ENCODE measurements at regions of chr4 and their contacts with region 1.

Region 1: GRCh38 chr4:163473576-163473975 is at the start of gene TKTL2:
- DNase-seq: no peak
- ATAC-seq: no peak
- H3K4me3 ChIP-seq: no peak within 1 kb of the TSS
- H3K4me3 Mint-ChIP-seq: no peak within 1 kb of the TSS
- H3K27ac ChIP-seq: no peak within 1 kb of the TSS
- H3K27ac Mint-ChIP-seq: no peak within 1 kb of the TSS
- H3K4me1 ChIP-seq: no peaks in the 10 kb centered on the region
- H3K4me1 Mint-ChIP-seq: no peaks in the 10 kb centered on the region
- H3K27me3 ChIP-seq: no peaks in the 10 kb centered on the region
- H3K27me3 Mint-ChIP-seq: peaks cover 14% of the 10 kb centered on the region
- CTCF ChIP-seq: no peak
- total RNA-seq, gene TKTL2: not detected

Region 2: DNA sequence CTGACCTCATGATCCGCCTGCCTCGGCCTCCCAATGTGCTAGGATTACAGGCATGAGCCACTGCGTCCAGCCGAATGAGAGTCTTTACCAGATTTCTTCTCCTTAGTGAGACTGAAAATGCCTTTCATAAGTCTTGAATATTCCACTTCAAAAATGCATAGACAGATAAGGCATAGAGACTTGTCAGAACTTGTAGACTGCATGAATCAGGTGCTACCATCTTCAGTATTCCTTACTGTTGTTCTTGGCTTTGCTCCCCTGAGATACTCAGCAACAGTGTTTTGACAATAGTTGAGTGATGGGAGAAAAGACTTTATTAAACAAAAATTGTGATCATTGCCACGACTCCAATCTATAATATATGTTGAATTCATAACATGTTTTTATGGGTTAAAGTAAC is 11.0 kb before region 1 on chr4:
- CTCF ChIA-PET with region 1: no interaction called
- POLR2A ChIA-PET with region 1: no interaction called
- intact Hi-C with region 1: no loop called
- DNase-seq: no peak
- ATAC-seq: no peak
- H3K4me3 ChIP-seq: no peak overlapping the region
- H3K4me3 Mint-ChIP-seq: no peak overlapping the region
- H3K27ac ChIP-seq: no peak overlapping the region
- H3K27ac Mint-ChIP-seq: no peak overlapping the region
- H3K4me1 ChIP-seq: no peaks in the 10 kb centered on the region
- H3K4me1 Mint-ChIP-seq: no peaks in the 10 kb centered on the region
- H3K27me3 ChIP-seq: peaks cover 0 to 3% of the 10 kb centered on the region in 2 experiments
- H3K27me3 Mint-ChIP-seq: peaks cover 36% of the 10 kb centered on the region
- CTCF ChIP-seq: no peak

Region 3: DNA sequence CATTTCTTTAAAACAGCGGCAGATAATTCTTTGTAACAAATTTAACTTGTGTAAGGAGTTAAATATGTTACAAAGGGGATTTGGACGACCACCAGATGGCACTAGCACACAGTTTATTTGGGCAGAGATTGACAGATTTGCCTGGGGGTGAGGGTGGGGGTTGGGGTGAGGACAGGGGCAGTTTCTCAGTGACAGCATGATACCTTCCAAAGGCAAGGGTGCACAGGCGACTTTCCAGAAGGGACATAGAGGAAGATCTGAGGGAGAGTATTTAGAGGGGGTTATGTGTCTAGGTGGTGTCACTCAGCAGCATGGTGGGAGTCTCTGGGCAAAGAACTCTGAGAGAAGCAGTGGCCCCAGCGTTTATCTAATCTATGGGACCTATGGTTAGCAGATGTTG is 11.3 kb after region 1 on chr4:
- CTCF ChIA-PET with region 1: no interaction called
- POLR2A ChIA-PET with region 1: no interaction called
- intact Hi-C with region 1: no loop called
- DNase-seq: peak; percentile 14 to 77 (median 39)
- ATAC-seq: peak; percentile 60
- H3K4me3 ChIP-seq: no peak overlapping the region
- H3K4me3 Mint-ChIP-seq: no peak overlapping the region
- H3K27ac ChIP-seq: no peak overlapping the region
- H3K27ac Mint-ChIP-seq: no peak overlapping the region
- H3K4me1 ChIP-seq: no peaks in the 10 kb centered on the region
- H3K4me1 Mint-ChIP-seq: no peaks in the 10 kb centered on the region
- H3K27me3 ChIP-seq: no peaks in the 10 kb centered on the region
- H3K27me3 Mint-ChIP-seq: peaks cover 11% of the 10 kb centered on the region
- CTCF ChIP-seq: peak; percentile 71

Region 4: DNA sequence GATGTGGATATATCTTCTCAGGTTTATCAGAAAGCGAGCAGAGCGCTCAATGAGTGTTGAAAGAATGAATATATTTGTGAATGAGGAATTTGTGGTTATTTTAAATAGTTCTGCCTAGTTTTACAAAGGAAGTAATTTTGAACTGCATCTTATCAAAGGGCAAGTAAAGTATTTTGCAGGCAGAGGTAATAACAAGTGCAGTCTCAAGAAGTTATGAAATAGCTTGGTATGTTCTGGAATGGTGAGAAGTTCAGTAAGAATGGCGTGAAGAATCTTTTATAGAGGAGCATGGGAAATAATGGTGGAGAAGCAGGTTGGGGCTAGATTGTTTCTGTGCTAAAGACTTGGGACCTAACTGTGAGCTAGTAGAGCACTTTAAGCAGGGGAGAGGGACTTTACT is 31.8 kb after region 1 on chr4:
- CTCF ChIA-PET with region 1: no interaction called
- POLR2A ChIA-PET with region 1: interaction called, 3 read pairs
- intact Hi-C with region 1: loop called in 1 of 2 experiments (anchors 1 kb)
- DNase-seq: no peak
- ATAC-seq: no peak
- H3K4me3 ChIP-seq: no peak overlapping the region
- H3K4me3 Mint-ChIP-seq: no peak overlapping the region
- H3K27ac ChIP-seq: no peak overlapping the region
- H3K27ac Mint-ChIP-seq: no peak overlapping the region
- H3K4me1 ChIP-seq: peaks cover 3% of the 10 kb centered on the region
- H3K4me1 Mint-ChIP-seq: peaks cover 48% of the 10 kb centered on the region
- H3K27me3 ChIP-seq: no peaks in the 10 kb centered on the region
- H3K27me3 Mint-ChIP-seq: no peaks in the 10 kb centered on the region
- CTCF ChIP-seq: no peak

Region 5: DNA sequence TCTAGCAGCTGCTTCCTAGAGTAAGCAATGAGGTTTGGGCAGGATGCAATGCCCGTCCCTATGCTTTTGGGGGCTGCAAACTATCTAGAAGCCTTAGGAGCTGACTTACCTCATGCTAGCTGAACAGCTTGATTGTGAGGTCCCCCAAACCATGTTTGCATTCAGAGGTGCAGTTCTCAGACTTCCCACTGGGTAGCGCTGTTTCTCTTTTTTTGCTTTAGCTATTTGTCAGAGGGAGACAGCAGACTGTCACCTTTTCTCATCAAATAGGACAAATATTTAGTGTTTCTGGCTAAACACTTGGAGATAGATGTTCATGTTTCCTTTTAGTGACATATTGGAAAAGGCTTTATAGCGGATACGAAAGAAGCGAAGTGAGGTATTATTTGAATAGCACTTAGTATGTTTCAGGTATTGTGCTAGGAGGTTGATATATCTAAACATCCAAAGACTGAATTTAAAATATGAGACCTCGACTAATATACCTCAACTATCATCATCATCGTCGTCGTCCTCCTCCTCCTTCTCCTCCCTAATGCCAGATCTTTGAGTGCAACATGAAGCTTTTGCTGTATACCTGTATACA is 1657.8 kb after region 1 on chr4:
- CTCF ChIA-PET with region 1: no interaction called
- POLR2A ChIA-PET with region 1: no interaction called
- intact Hi-C with region 1: no loop called
- DNase-seq: peak; percentile 54 to 84 (median 76)
- ATAC-seq: peak; percentile 78
- H3K4me3 ChIP-seq: no peak overlapping the region
- H3K4me3 Mint-ChIP-seq: no peak overlapping the region
- H3K27ac ChIP-seq: no peak overlapping the region
- H3K27ac Mint-ChIP-seq: no peak overlapping the region
- H3K4me1 ChIP-seq: no peaks in the 10 kb centered on the region
- H3K4me1 Mint-ChIP-seq: no peaks in the 10 kb centered on the region
- H3K27me3 ChIP-seq: peaks cover 0 to 2% of the 10 kb centered on the region in 2 experiments
- H3K27me3 Mint-ChIP-seq: peaks cover 36% of the 10 kb centered on the region
- CTCF ChIP-seq: peak; percentile 93